Uterus (tissue), 4 donors: ENCODE measurements at regions of chr9 and their contacts with region 1.

Region 1: GRCh38 chr9:17810728-17811571 is 232.1 kb downstream of the SH3GL2 start:
- DNase-seq: peak; percentile 40 to 71
- H3K4me3 ChIP-seq: peak overlapping the region in 1 of 2 donors; percentile 13
- H3K27ac ChIP-seq: peak overlapping the region in 1 of 2 donors; percentile 57
- H3K4me1 ChIP-seq: no peaks in the 10 kb centered on the region
- H3K27me3 ChIP-seq: no peaks in the 10 kb centered on the region
- CTCF ChIP-seq: peak; percentile 73 to 87 (median 82)
- POLR2A ChIP-seq: no peak

Region 2: GRCh38 chr9:16708638-16709435 is 1102.1 kb before region 1 on chr9:
- intact Hi-C with region 1: no loop called
- DNase-seq: no peak
- H3K4me3 ChIP-seq: peak overlapping the region in 1 of 2 donors; percentile 4
- H3K27ac ChIP-seq: peak overlapping the region; percentile 40 to 60
- H3K4me1 ChIP-seq: peaks cover 0 to 5% of the 10 kb centered on the region in 2 donors
- H3K27me3 ChIP-seq: no peaks in the 10 kb centered on the region
- CTCF ChIP-seq: no peak
- POLR2A ChIP-seq: no peak

Region 3: DNA sequence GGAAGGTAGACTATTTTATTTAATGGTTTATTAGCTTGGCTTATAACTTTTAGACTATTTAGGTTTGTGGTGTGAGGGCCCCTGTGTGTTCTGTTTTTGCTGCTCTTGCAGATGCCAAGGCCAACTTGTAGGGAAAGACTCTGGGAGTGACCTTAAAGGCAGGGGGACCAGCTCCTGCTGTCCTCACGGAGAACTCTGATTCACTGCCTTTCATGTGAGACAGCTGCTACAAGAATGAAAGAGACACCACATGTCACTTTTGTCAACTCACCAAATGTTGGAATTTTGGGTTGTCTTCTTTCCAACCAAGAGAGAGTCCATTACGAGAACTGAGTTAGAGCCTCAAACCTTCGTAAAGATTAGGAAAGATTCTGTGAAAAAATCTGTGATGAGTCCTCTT is 404.7 kb after region 1 on chr9:
- intact Hi-C with region 1: loop called (anchors 10 kb)
- DNase-seq: no peak
- H3K4me3 ChIP-seq: no peak overlapping the region
- H3K27ac ChIP-seq: no peak overlapping the region
- H3K4me1 ChIP-seq: peaks cover 0 to 3% of the 10 kb centered on the region in 2 donors
- H3K27me3 ChIP-seq: no peaks in the 10 kb centered on the region
- CTCF ChIP-seq: no peak
- POLR2A ChIP-seq: no peak